Activated CD4-positive, alpha-beta T cell treated with anti-CD3 and anti-CD28 coated beads for 36 hours (primary cell): ENCODE measurements at regions of chr22 and their contacts with region 1.

Region 1: DNA sequence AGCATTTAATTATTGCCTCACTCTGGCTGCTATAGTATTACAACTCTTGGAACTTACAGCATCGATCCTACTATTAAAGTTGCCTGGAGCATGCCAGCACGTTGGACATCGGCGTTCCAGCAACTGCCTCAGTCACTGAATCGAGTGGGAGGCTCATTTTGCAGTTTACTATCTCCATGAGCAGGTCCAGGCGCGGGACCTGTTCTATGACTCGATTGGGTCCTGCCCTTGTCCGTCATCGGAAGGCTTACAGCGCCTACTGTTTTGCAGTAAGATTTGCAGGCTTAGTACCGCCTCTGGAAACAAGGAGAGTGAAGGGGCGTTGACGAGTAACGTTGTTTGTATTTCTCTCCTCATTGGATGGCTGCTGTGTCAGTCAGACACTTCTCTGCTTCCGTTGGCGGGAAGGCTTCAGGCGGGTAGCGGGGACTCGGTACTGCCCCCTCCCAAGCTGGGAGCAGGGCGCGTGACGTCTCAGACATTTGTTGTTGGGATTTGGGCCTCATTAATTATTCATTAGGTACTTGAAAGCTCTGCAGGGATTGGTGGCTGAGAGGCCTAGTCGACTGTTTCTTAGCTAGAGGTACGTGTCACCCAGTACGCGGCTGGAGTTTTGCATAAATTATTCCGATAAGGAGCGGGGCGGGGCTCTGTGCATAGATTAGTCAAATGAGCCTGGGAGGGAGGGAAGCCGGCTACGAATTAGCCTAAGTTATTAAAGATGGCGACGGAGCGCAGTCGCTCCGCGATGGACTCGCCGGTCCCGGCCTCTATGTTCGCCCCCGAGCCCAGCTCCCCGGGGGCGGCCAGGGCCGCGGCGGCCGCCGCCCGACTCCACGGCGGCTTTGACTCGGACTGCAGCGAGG is at the start of gene GTPBP1:
- DNase-seq: peak; percentile 98
- ATAC-seq: peak; percentile 89
- H3K4me3 Mint-ChIP-seq: peak within 1 kb of the TSS; percentile 93
- H3K27ac Mint-ChIP-seq: peak within 1 kb of the TSS; percentile 97
- H3K4me1 Mint-ChIP-seq: peaks cover 53% of the 10 kb centered on the region
- H3K27me3 Mint-ChIP-seq: no peaks in the 10 kb centered on the region
- total RNA-seq, gene GTPBP1: 88.6 to 92.8 TPM

Region 2: DNA sequence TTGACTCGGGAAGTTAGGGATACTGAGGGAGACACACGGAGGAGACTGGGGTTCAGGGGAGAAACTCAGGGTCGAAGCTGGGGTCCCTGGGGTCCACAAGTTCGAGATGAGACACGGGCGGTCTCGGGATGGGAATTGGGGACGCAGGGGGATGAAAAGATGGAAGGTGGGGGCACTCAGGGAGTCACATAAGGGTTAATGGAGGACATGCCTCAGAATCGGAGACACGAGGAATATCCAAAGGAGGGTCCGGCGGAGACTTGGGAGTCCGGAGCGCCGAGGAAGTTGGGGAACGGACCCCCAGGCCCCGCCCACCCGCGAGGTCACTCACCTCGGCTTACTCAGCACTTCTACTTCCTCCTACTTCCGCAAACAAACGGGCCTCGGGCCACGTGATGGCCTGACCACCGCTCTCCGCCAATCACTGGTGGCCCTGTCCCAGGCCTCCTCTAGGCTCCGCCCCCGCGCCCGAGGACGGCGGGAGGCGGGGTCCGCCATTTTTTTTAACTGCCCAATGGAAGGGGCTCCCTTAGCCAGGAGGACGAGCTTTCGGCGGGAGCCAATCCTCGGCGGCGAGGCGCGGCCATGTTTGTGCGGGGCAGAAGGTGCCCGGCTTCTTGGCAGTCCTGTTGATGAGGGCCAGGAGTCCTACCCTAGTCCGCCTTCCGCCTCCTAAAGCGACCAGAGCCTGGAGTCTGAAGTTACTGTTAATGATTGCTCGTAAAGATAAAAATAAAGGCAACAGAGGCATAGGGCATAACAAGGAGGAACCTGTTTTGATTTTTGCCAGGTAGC is 523.8 kb before region 1 on chr22 and contains the start of gene PLA2G6:
- CTCF ChIA-PET with region 1: no interaction called
- POLR2A ChIA-PET with region 1: no interaction called
- intact Hi-C with region 1: loop called in 1 of 2 experiments (anchors 1 kb)
- DNase-seq: peak; percentile 99
- ATAC-seq: peak; percentile 92
- H3K4me3 Mint-ChIP-seq: peak within 1 kb of the TSS; percentile 96
- H3K27ac Mint-ChIP-seq: peak within 1 kb of the TSS; percentile 98
- H3K4me1 Mint-ChIP-seq: peaks cover 32% of the 10 kb centered on the region
- H3K27me3 Mint-ChIP-seq: no peaks in the 10 kb centered on the region
- total RNA-seq, gene PLA2G6: 54.0 to 57.3 TPM

Region 3: GRCh38 chr22:38317122-38317994 is 388.1 kb before region 1 on chr22 and contains the start of gene CSNK1E:
- CTCF ChIA-PET with region 1: interaction called, 3 read pairs
- POLR2A ChIA-PET with region 1: no interaction called
- intact Hi-C with region 1: loop called in 1 of 2 experiments (anchors 1 kb)
- DNase-seq: peak; percentile 84
- ATAC-seq: peak; percentile 63
- H3K4me3 Mint-ChIP-seq: peak within 1 kb of the TSS; percentile 90
- H3K27ac Mint-ChIP-seq: peak within 1 kb of the TSS; percentile 94
- H3K4me1 Mint-ChIP-seq: peaks cover 41% of the 10 kb centered on the region
- H3K27me3 Mint-ChIP-seq: no peaks in the 10 kb centered on the region
- total RNA-seq, gene CSNK1E: 117 to 145 TPM

Region 4: DNA sequence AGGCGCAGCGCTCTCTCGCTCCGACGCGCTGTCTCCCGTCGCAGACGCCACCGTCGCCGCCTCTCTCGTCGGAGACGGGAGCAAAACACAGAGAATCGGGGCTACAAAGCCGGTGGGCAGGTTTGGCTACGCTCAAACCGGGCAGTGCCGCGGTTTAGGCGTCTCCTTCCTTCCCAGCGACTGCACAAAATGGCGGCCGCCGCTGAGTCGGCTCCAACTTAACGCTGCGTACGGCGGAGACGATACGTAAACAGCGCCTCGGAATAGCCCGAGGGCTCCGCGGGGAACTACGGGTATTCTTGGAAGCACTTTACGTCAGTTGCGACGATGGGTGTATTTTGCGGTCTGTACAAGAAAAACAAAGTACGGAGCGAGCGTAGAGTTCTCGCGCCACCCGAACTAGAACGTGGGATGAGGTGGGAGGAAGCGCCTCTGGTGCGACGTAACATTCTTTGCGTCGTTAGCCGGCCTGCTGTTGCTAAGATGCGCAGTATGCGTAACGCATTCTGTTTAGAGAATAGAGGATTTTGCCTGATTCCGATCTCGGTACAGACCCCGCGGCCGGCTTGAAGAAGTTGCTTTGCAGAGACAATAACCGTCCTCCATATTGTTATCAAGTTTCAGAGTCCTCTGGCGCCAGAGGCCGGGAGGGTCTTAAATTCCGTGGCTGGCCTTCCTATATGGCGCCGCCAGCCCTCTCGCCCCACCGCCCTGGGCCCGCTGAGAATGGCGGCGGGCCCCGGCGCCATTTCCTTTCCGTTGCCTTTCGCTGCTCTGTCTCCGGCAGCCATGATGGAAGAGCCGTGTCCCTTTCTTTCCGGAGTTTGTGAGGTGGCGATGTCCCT is 199.1 kb before region 1 on chr22 and contains the start of gene DDX17:
- CTCF ChIA-PET with region 1: no interaction called
- POLR2A ChIA-PET with region 1: no interaction called
- intact Hi-C with region 1: loop called (anchors 1 kb)
- DNase-seq: peak; percentile 95
- ATAC-seq: peak; percentile 89
- H3K4me3 Mint-ChIP-seq: peak within 1 kb of the TSS; percentile 89
- H3K27ac Mint-ChIP-seq: peak within 1 kb of the TSS; percentile 100
- H3K4me1 Mint-ChIP-seq: peaks cover 36% of the 10 kb centered on the region
- H3K27me3 Mint-ChIP-seq: no peaks in the 10 kb centered on the region
- total RNA-seq, gene DDX17: 259 to 328 TPM

Region 5: GRCh38 chr22:38681784-38682335 is 23.6 kb before region 1 on chr22 and contains the start of gene TOMM22:
- CTCF ChIA-PET with region 1: interaction called, 34 read pairs
- POLR2A ChIA-PET with region 1: interaction called, 13 read pairs
- intact Hi-C with region 1: loop called (anchors 1 to 2 kb)
- DNase-seq: peak; percentile 92
- ATAC-seq: peak; percentile 98
- H3K4me3 Mint-ChIP-seq: peak within 1 kb of the TSS; percentile 90
- H3K27ac Mint-ChIP-seq: peak within 1 kb of the TSS; percentile 98
- H3K4me1 Mint-ChIP-seq: peaks cover 20% of the 10 kb centered on the region
- H3K27me3 Mint-ChIP-seq: no peaks in the 10 kb centered on the region
- total RNA-seq, gene TOMM22: 146 to 155 TPM

Region 6: DNA sequence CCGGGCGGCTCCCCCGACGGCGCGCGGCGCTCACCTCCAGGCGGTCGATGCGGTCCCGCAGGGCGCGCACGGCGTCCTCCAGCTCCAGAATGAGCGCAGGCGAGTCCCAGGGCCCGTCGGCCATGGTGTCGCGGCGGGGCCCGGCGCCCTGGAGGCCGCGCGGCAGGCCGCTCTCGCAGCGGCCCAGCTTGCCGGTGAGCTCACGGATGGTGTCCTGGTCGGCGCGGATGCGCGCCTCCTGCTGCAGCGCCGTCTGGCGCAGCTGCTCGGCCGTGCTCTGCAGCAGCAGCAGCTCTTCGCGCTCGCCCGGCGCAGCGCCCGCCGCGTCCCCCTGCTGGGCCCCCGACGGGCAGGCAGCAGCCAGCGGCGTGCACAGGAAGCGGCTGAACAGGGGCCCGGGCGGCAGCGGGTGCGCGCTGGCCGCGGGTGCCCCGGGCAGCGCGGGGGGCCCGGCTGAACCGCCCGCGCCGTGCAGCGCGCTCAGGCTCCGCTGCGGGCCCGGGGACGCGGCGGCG is 137.8 kb after region 1 on chr22:
- CTCF ChIA-PET with region 1: no interaction called
- POLR2A ChIA-PET with region 1: no interaction called
- intact Hi-C with region 1: loop called in 1 of 2 experiments (anchors 1 kb)
- DNase-seq: peak; percentile 79
- ATAC-seq: peak; percentile 92
- H3K4me3 Mint-ChIP-seq: peak overlapping the region; percentile 68
- H3K27ac Mint-ChIP-seq: no peak overlapping the region
- H3K4me1 Mint-ChIP-seq: peaks cover 17% of the 10 kb centered on the region
- H3K27me3 Mint-ChIP-seq: peaks cover 18% of the 10 kb centered on the region

Region 7: GRCh38 chr22:39041908-39042307 is 336.4 kb after region 1 on chr22:
- CTCF ChIA-PET with region 1: no interaction called
- POLR2A ChIA-PET with region 1: no interaction called
- intact Hi-C with region 1: no loop called
- DNase-seq: no peak
- ATAC-seq: no peak
- H3K4me3 Mint-ChIP-seq: peak overlapping the region; percentile 86
- H3K27ac Mint-ChIP-seq: peak overlapping the region; percentile 65
- H3K4me1 Mint-ChIP-seq: peaks cover 20% of the 10 kb centered on the region
- H3K27me3 Mint-ChIP-seq: no peaks in the 10 kb centered on the region

Region 8: DNA sequence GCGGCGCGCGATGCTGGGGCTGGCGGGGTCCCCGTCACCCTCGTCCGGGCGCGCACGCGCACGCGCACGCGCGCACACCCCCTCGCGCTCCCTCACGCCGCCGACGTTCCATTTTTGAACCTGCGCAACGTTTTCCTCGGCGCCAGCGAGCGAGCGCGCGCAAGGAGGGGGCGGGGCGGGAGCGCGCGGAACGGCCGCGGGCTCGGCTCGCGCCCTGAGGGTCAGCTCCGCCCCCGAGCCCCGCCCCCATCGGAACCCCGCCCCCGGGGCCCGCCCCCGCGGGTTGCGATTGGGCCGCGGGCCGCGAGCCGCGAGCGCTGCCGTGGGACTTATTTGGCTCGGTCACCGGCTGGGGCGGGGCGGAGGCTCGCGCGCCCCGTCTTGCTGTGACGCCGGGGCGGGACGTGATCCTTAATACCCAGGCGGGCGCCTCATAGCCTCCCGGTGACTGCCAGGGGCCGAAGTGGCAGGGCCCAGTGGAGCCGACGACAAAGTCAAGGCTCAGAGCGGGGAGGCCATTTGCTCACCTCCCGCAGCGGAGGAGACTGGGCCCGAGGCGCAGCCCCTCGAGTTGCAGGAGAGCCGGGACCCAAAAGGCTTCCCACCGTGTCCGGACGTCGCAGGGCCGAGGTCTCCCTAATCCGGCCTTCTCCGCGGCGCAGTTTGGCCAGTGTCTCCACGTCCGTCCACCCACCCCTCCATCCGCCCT is 447.2 kb after region 1 on chr22 and contains the start of gene CBX7:
- CTCF ChIA-PET with region 1: no interaction called
- POLR2A ChIA-PET with region 1: no interaction called
- intact Hi-C with region 1: loop called in 1 of 2 experiments (anchors 2 kb)
- DNase-seq: peak; percentile 95
- ATAC-seq: peak; percentile 83
- H3K4me3 Mint-ChIP-seq: peak within 1 kb of the TSS; percentile 76
- H3K27ac Mint-ChIP-seq: peak within 1 kb of the TSS; percentile 72
- H3K4me1 Mint-ChIP-seq: peaks cover 40% of the 10 kb centered on the region
- H3K27me3 Mint-ChIP-seq: peaks cover 13% of the 10 kb centered on the region
- total RNA-seq, gene CBX7: 19.9 to 20.3 TPM